ENCODE measurements at regions of chr7 and their contacts with region 1.

Region 1: GRCh38 chr7:55887821-55888247 is 578 bp downstream of the ZNF713 start:
- DNase-seq: peak in 1 of 10 donors; percentile 15
- H3K4me3 ChIP-seq: peak overlapping the region; percentile 33 to 90 (median 64)
- H3K27ac ChIP-seq: peak overlapping the region in 49 of 59 donors; percentile 22 to 88 (median 75)
- H3K27me3 ChIP-seq: no peaks in the 10 kb centered on the region
- CTCF ChIP-seq: no peak

Region 2: DNA sequence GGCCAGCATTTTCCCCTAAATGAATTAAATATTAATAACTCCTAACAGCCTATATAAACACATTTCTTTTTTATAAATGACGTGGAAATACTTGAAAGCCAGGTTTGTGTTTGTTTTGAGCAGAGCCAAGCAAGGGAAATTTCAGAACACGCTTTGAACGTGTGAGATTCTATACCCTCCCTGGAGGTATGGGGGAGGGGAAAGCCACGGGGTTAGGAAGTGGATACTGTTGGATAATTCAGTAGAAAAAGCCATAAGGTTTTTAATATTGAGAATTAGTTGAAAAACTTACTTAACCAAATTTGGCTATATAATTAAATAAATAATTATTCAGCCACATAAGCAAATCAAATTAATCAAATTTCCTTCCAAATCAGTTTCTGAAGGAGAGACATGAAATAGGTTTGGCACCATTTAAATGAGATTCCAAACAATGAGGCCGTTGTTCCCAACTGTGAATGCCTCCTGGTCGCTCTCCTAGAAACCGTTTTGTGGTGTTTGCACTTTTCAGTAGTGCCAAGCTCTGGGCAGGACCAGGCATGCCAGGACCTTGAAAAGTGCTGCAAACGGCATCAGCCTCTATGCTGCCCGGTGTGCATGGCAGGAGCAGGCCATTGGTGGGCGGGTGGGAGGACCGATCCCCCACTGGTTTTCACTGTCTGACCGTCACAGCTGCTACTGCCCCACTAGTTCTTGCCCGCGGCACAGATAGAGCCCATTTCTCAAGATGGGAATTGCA is 113.3 kb before region 1 on chr7:
- intact Hi-C with region 1: loop called in 1 of 2 experiments (anchors 10 kb)
- DNase-seq: peak in 7 of 10 donors; percentile 5 to 57 (median 38)
- H3K4me3 ChIP-seq: peak overlapping the region in 41 of 59 donors; percentile 3 to 59 (median 32)
- H3K27ac ChIP-seq: peak overlapping the region in 7 of 59 donors; percentile 11 to 73 (median 47)
- H3K27me3 ChIP-seq: no peaks in the 10 kb centered on the region
- CTCF ChIP-seq: peak in 1 of 56 donors; percentile 11